ENCODE measurements at regions of chr1 and their contacts with region 1.

Region 1: DNA sequence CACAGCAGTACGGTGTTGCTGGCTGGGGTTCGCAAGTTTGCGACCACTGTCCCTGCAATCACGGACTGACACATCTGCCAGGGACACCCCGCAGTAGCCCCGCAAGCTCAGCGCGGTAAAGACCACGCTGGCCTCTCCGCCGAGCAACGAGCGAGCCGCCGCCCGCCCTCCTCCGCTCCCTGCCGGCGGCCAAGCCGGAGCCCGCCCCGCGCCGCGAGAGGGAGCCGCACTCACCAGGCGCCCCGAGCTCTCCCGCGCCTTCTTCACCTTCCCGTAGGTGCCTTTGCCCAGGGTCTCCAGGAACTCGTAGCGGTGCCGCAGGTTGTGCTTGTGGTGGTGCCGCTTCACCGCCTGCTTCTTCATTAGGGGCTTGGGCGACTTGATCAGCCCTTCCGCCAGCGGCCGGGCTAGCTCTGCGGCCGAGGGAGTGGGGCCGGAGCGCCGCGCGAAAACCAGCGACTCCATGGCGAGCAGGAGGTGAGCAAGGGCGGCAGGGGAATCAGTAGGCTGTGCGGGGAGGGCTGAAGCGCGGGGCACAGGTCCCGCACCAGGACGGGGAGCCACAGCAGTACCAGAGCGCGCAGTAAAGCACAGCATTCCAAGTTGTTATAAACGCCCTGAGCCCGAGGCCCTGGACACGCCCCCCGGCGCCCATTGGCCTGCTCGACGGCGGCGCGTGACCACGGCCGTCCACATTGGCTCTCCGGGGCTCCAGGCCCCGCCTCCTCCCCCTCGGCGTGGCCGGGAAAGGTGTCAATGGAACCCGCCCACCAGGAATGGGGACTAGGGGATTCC is at the start of gene NUAK2:
- DNase-seq: peak; percentile 87
- H3K4me3 ChIP-seq: peak within 1 kb of the TSS; percentile 75
- H3K27ac ChIP-seq: peak within 1 kb of the TSS; percentile 16
- H3K4me1 ChIP-seq: peaks cover 61% of the 10 kb centered on the region
- CTCF ChIP-seq: peak; percentile 61
- total RNA-seq, gene NUAK2: 6.5 and 9.1 TPM in 2 replicates

Region 2: GRCh38 chr1:205227584-205228006 is 93.8 kb before region 1 on chr1 and contains the start of gene TMCC2:
- CTCF ChIA-PET with region 1: interaction called, 4 read pairs
- POLR2A ChIA-PET with region 1: no interaction called
- intact Hi-C with region 1: loop called (anchors 2 kb)
- DNase-seq: peak; percentile 94
- H3K4me3 ChIP-seq: peak within 1 kb of the TSS; percentile 77
- H3K27ac ChIP-seq: peak within 1 kb of the TSS; percentile 17
- H3K4me1 ChIP-seq: peaks cover 28% of the 10 kb centered on the region
- CTCF ChIP-seq: no peak
- total RNA-seq, gene TMCC2: 7.0 and 7.8 TPM in 2 replicates

Measured in OCI-LY7 (cell line).